ENCODE measurements at regions of chr17 and their contacts with region 1.

Region 1: GRCh38 chr17:17440010-17440843 is 36.6 kb upstream of the MED9 start:
- DNase-seq: peak; percentile 80 to 83
- H3K4me3 ChIP-seq: no peak overlapping the region
- H3K4me3 Mint-ChIP-seq: no peak overlapping the region
- H3K27ac Mint-ChIP-seq: no peak overlapping the region
- H3K4me1 ChIP-seq: peaks cover 57% of the 10 kb centered on the region
- H3K4me1 Mint-ChIP-seq: peaks cover 26% of the 10 kb centered on the region
- H3K27me3 ChIP-seq: no peaks in the 10 kb centered on the region
- H3K27me3 Mint-ChIP-seq: no peaks in the 10 kb centered on the region
- CTCF ChIP-seq: peak; percentile 67 to 74

Region 2: GRCh38 chr17:17387830-17388441 is 52.3 kb before region 1 on chr17:
- CTCF ChIA-PET with region 1: interaction called, 10 read pairs
- POLR2A ChIA-PET with region 1: no interaction called
- intact Hi-C with region 1: loop called (anchors 2 kb)
- DNase-seq: peak; percentile 86 to 88
- H3K4me3 ChIP-seq: no peak overlapping the region
- H3K4me3 Mint-ChIP-seq: no peak overlapping the region
- H3K27ac Mint-ChIP-seq: no peak overlapping the region
- H3K4me1 ChIP-seq: peaks cover 12% of the 10 kb centered on the region
- H3K4me1 Mint-ChIP-seq: peaks cover 21% of the 10 kb centered on the region
- H3K27me3 ChIP-seq: no peaks in the 10 kb centered on the region
- H3K27me3 Mint-ChIP-seq: no peaks in the 10 kb centered on the region
- CTCF ChIP-seq: peak; percentile 78 to 94

Region 3: GRCh38 chr17:17401271-17401781 is 38.9 kb before region 1 on chr17:
- CTCF ChIA-PET with region 1: no interaction called
- POLR2A ChIA-PET with region 1: no interaction called
- intact Hi-C with region 1: no loop called
- DNase-seq: peak in 1 of 2 experiments; percentile 13
- H3K4me3 ChIP-seq: no peak overlapping the region
- H3K4me3 Mint-ChIP-seq: no peak overlapping the region
- H3K27ac Mint-ChIP-seq: no peak overlapping the region
- H3K4me1 ChIP-seq: peaks cover 4% of the 10 kb centered on the region; the same call in 1 of the 2 replicates
- H3K4me1 Mint-ChIP-seq: peaks cover 4% of the 10 kb centered on the region
- H3K27me3 ChIP-seq: no peaks in the 10 kb centered on the region
- H3K27me3 Mint-ChIP-seq: no peaks in the 10 kb centered on the region
- CTCF ChIP-seq: no peak

Region 4: DNA sequence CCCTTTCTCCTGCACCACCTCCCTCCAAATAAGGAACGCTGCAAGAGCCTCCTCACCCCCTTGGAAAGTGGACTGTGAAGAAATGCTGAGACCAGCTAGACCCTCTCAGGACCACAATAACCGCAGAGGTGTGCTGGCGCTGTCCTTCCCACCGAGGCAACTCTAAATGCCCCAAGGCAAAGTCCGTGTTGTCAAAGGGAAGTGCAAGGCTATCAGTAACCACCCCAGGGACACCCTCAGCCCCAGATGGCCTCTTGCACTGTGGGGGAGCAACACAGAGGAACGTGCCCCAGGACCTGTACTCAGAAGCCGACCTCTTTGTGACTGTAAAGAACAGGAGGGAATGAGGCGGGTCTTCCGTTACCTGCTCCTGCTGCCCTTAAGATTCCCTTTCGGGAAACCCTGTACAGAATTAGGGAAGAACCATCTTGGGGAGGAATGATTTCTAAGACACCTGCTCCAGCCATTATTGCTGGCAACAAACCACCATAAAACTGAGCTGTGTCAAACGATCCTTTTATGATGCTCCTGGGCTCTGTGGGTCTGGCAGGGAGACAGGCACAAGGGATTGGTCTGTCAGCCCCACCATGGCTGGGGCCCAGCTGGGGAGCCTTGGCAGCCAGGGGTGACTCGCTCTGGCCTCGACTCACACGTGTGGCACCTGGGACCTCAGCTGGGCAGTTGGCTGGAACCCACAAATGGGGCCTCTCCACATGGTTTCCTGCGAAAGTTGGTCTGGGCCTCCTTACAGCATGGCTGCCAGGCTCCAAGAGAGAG is 22.0 kb after region 1 on chr17:
- CTCF ChIA-PET with region 1: no interaction called
- POLR2A ChIA-PET with region 1: no interaction called
- intact Hi-C with region 1: no loop called
- DNase-seq: no peak
- H3K4me3 ChIP-seq: no peak overlapping the region
- H3K4me3 Mint-ChIP-seq: no peak overlapping the region
- H3K27ac Mint-ChIP-seq: no peak overlapping the region
- H3K4me1 ChIP-seq: no peaks in the 10 kb centered on the region
- H3K4me1 Mint-ChIP-seq: no peaks in the 10 kb centered on the region
- H3K27me3 ChIP-seq: no peaks in the 10 kb centered on the region
- H3K27me3 Mint-ChIP-seq: peaks cover 6% of the 10 kb centered on the region
- CTCF ChIP-seq: no peak